ENCODE measurements at regions of chr1 and their contacts with region 1.

Region 1: GRCh38 chr1:37931361-37932158 is 15.3 kb downstream of the INPP5B start:
- H3K4me3 ChIP-seq: peak overlapping the region; percentile 81
- H3K27ac ChIP-seq: peak overlapping the region; percentile 37
- H3K4me1 ChIP-seq: peaks cover 5% of the 10 kb centered on the region; the same call in 1 of the 2 replicates
- CTCF ChIP-seq: peak; percentile 17; the same call in 1 of the 2 replicates

Region 2: GRCh38 chr1:37859507-37860345 is 71.8 kb before region 1 on chr1 and contains the start of gene MTF1:
- CTCF ChIA-PET with region 1: interaction called, 17 read pairs
- POLR2A ChIA-PET with region 1: interaction called, 4 read pairs
- H3K4me3 ChIP-seq: peak within 1 kb of the TSS; percentile 100
- H3K27ac ChIP-seq: peak within 1 kb of the TSS; percentile 47; the same call in 1 of the 2 replicates
- H3K4me1 ChIP-seq: no peaks in the 10 kb centered on the region
- CTCF ChIP-seq: peak; percentile 93

Region 3: GRCh38 chr1:37951041-37951782 is 19.7 kb after region 1 on chr1:
- CTCF ChIA-PET with region 1: interaction called, 6 read pairs
- POLR2A ChIA-PET with region 1: interaction called, 16 read pairs
- H3K4me3 ChIP-seq: no peak overlapping the region
- H3K27ac ChIP-seq: no peak overlapping the region
- H3K4me1 ChIP-seq: no peaks in the 10 kb centered on the region
- CTCF ChIP-seq: no peak